IMR-90 (cell line): ENCODE measurements at regions of chr17 and their contacts with region 1.

Region 1: GRCh38 chr17:83041305-83041704 is 38.1 kb upstream of the METRNL start:
- DNase-seq: peak; percentile 4
- ATAC-seq: no peak
- H3K4me3 ChIP-seq: no peak overlapping the region
- H3K27ac ChIP-seq: no peak overlapping the region
- H3K4me1 ChIP-seq: no peaks in the 10 kb centered on the region
- H3K27me3 ChIP-seq: no peaks in the 10 kb centered on the region
- CTCF ChIP-seq: no peak
- POLR2A ChIP-seq: no peak
- RAD21 ChIP-seq: no peak

Region 2: GRCh38 chr17:82881900-82882714 is 159.2 kb before region 1 on chr17:
- CTCF ChIA-PET with region 1: no interaction called
- POLR2A ChIA-PET with region 1: no interaction called
- dilution Hi-C with region 1: no loop called
- in situ Hi-C with region 1: no loop called
- intact Hi-C with region 1: no loop called
- DNase-seq: no peak
- ATAC-seq: no peak
- H3K4me3 ChIP-seq: no peak overlapping the region
- H3K27ac ChIP-seq: no peak overlapping the region
- H3K4me1 ChIP-seq: peaks cover 10% of the 10 kb centered on the region
- H3K27me3 ChIP-seq: no peaks in the 10 kb centered on the region
- CTCF ChIP-seq: no peak
- POLR2A ChIP-seq: no peak
- RAD21 ChIP-seq: no peak

Region 3: GRCh38 chr17:82993005-82993404 is 48.3 kb before region 1 on chr17:
- CTCF ChIA-PET with region 1: no interaction called
- POLR2A ChIA-PET with region 1: no interaction called
- dilution Hi-C with region 1: no loop called
- in situ Hi-C with region 1: no loop called
- intact Hi-C with region 1: loop called (anchors 10 kb)
- DNase-seq: no peak
- ATAC-seq: no peak
- H3K4me3 ChIP-seq: no peak overlapping the region
- H3K27ac ChIP-seq: no peak overlapping the region
- H3K4me1 ChIP-seq: no peaks in the 10 kb centered on the region
- H3K27me3 ChIP-seq: no peaks in the 10 kb centered on the region
- CTCF ChIP-seq: no peak
- POLR2A ChIP-seq: no peak
- RAD21 ChIP-seq: no peak

Region 4: DNA sequence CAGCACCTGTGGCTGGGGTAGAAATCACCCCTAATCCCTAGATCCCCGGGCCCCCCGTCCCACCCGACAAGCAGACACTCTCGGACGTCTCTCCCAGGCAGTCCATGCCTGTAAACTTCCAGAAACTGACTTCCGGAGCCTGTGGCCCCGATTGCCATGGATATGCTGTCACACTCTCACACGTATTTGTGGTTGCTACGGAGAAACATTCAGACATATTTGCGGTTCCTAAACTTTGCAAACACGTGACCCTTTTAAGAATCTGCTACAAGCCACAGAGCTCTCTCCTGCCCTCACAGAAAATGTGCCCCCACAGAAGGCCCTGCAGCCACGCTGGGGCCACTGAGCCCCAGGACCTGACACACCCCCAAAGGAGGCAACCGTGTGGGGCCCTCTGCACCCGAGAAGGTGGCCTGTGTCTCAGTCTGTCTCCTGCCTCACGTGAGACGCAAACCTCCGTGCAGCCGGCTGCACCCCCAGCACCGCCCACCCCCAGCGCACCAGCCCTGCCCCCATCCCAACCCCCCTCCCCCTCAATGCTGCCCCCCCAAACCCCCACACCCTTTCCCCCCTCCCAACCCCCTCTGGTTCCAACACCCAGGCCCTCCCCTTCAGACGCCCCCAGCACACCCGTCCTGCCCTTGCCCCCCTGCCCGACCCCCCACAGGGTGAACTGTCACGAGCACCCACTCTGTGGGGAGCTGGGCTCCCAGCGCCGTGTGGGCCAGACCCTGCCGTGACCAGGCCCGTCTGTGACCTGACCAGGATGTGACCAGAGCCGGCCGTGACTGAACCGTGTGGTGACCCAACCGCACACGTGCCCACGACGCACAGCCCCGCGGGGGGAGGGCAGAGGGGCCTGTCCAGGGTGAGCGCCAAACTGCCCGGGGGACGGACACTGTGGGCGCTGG is 28.2 kb before region 1 on chr17:
- CTCF ChIA-PET with region 1: no interaction called
- POLR2A ChIA-PET with region 1: no interaction called
- dilution Hi-C with region 1: no loop called
- in situ Hi-C with region 1: no loop called
- intact Hi-C with region 1: no loop called
- DNase-seq: peak; percentile 97
- ATAC-seq: peak; percentile 91
- H3K4me3 ChIP-seq: no peak overlapping the region
- H3K27ac ChIP-seq: peak overlapping the region; percentile 53; the same call in 1 of the 2 replicates
- H3K4me1 ChIP-seq: peaks cover 16% of the 10 kb centered on the region
- H3K27me3 ChIP-seq: no peaks in the 10 kb centered on the region
- CTCF ChIP-seq: no peak
- POLR2A ChIP-seq: peak; percentile 60; the same call in 1 of the 2 replicates
- RAD21 ChIP-seq: peak; percentile 24; the same call in 1 of the 2 replicates

Region 5: DNA sequence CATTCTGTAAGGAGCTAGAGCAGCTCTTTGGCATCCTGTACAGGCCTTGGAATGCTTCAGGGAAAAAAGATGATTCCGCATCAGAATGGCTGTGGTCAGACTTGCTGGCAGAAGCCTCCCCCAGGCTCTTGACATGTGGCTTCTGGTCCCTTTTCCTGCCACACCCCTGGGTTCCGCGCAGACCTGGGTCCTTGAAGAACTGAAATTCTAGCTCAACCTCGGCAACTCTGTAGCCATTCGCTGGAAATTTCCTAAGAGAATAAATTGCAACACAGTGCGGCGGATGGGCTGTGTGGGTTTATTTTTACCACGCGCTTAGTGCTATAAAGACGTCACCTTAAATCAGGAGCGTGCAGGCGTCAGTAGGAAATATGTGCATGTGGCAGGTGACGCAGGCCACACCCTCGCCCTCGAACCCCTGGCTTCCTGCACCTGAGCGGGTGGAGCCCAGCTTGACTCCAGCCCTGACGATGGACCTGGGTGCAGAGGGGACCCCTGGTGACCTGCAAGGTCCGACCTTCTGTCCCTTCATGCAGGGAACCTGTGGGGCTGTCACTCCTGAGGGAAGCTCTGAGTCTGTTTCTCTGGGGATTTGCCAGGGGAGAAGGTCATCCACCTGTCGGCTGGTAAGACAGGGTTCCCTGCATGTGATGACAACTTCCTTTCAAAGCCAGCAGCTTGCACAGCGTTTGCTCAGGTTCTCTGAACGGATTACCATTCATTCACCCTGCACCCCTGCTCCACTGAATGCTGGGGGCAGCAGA is 84.4 kb after region 1 on chr17:
- CTCF ChIA-PET with region 1: no interaction called
- POLR2A ChIA-PET with region 1: no interaction called
- dilution Hi-C with region 1: no loop called
- in situ Hi-C with region 1: no loop called
- intact Hi-C with region 1: no loop called
- DNase-seq: no peak
- ATAC-seq: no peak
- H3K4me3 ChIP-seq: no peak overlapping the region
- H3K27ac ChIP-seq: no peak overlapping the region
- H3K4me1 ChIP-seq: no peaks in the 10 kb centered on the region
- H3K27me3 ChIP-seq: peaks cover 39% of the 10 kb centered on the region
- CTCF ChIP-seq: no peak
- POLR2A ChIP-seq: no peak
- RAD21 ChIP-seq: no peak